RWPE1 (cell line): ENCODE measurements at regions of chr3 and their contacts with region 1.

Region 1: DNA sequence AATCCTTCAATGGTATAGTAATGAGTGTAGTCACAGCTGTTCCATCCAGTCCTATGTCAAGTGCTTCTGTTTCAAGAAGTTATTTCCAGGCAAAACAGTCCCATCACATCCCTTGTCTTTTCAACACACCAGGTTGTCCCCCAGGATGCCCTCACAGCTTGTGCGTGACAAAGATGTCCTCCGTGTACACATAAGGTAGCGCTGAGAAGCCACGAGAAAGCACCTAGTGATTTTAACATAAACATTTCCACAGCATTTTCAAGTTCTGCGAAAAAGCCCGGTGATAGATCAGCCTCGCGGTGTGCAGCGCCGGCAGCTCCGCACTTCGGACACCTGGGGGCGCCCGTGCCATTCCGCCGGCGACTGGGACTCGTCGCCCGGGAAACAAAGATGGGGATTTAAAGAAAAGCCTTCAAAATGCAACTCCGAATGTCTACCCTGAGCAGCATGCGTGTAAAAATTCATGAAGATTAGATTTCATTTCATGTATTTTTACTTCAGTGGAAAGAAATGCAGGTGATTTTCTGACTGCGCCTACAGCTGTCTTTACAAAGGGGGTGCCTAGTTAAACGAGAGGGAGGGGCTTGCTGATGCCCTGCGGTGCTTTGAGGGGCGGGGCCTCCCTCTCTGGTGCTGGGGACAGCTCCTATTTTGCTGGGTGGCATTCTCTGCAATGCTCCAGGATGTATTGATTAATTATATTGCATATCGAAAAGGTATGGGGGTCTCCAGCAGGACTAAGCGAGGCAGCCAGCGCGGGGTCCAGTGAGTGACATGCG is 49.9 kb downstream of the KY start:
- DNase-seq: peak; percentile 78
- H3K27ac ChIP-seq: no peak overlapping the region
- CTCF ChIP-seq: peak; percentile 98

Region 2: GRCh38 chr3:134754768-134755559 is 154.1 kb after region 1 on chr3:
- CTCF ChIA-PET with region 1: interaction called, 18 read pairs
- POLR2A ChIA-PET with region 1: no interaction called
- DNase-seq: peak; percentile 22
- H3K27ac ChIP-seq: no peak overlapping the region
- CTCF ChIP-seq: peak; percentile 27; the same call in 1 of the 2 replicates

Region 3: GRCh38 chr3:135503760-135504686 is 903.1 kb after region 1 on chr3:
- CTCF ChIA-PET with region 1: interaction called, 11 read pairs
- POLR2A ChIA-PET with region 1: no interaction called
- DNase-seq: peak; percentile 57
- H3K27ac ChIP-seq: no peak overlapping the region
- CTCF ChIP-seq: peak; percentile 46; the same call in 1 of the 2 replicates

Region 4: GRCh38 chr3:136093771-136094170 is 1492.9 kb after region 1 on chr3:
- CTCF ChIA-PET with region 1: no interaction called
- POLR2A ChIA-PET with region 1: no interaction called
- DNase-seq: no peak
- H3K27ac ChIP-seq: no peak overlapping the region
- CTCF ChIP-seq: no peak